GM10248 (cell line): ENCODE measurements at regions of chr2 and their contacts with region 1.

Region 1: GRCh38 chr2:85642725-85643124 is 25.3 kb downstream of the SFTPB start:
- DNase-seq: no peak
- CTCF ChIP-seq: no peak

Region 2: GRCh38 chr2:85485815-85486214 is 156.9 kb before region 1 on chr2:
- CTCF ChIA-PET with region 1: no interaction called
- POLR2A ChIA-PET with region 1: no interaction called
- DNase-seq: no peak
- CTCF ChIP-seq: no peak

Region 3: DNA sequence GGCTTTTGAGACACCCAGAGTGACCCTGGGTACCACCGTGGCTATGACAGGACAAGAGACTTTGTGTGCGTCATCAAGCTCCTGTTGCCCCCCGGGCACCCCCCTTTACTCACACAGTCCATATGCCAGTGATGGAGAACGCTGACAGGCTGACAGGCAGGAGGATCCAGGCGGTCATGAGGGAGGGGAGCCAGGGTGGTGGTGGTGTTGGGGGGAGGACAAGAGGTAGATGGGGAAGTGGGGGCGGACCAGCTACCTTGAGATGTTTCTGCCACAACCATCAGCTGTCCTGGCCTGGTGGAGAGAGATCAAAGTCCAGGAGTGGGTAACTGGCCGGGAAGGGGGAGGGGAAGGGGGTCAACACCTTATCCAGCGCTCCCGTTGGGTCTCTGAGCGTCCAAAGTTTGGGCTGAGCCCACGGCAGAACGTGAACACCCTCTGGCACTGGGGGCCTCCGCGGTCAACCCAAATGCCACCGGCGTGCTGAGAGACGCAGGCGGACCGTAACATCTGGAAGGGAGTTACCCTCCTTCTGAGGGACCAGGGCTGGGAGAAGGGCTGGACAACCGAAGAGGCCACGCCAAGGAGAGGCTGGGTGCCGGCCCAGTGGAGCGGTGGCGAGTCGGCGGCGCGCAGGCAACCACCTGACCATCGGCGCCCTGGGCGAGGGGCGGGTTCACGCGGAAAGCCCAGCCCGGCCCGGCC is 40.8 kb before region 1 on chr2:
- CTCF ChIA-PET with region 1: interaction called, 11 read pairs
- POLR2A ChIA-PET with region 1: no interaction called
- DNase-seq: peak; percentile 48
- CTCF ChIP-seq: no peak

Region 4: DNA sequence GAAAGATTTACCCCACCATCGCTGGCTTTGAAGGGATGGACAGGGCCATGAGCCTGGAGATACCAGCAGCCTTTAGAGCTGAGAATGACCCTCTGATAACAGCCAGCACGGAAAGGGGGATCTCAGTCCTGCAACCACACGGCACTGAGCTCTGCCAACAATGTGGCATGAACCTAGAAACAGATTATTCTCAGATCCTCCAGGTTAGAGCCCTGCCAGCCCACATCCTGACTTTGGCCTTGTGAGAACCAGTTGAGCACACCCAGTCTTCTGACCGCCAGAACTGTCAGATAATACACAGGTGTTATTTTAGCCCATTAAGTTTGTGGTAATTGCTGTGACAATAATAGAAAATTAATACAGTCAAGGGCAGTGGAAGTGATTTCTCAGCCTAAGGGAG is 42.1 kb after region 1 on chr2:
- CTCF ChIA-PET with region 1: interaction called, 12 read pairs
- POLR2A ChIA-PET with region 1: no interaction called
- DNase-seq: no peak
- CTCF ChIP-seq: no peak

Region 5: GRCh38 chr2:85712849-85713602 is 70.3 kb after region 1 on chr2:
- CTCF ChIA-PET with region 1: interaction called, 117 read pairs
- POLR2A ChIA-PET with region 1: no interaction called
- DNase-seq: no peak
- CTCF ChIP-seq: no peak

Region 6: GRCh38 chr2:85728883-85729824 is 86.4 kb after region 1 on chr2:
- CTCF ChIA-PET with region 1: interaction called, 13 read pairs
- POLR2A ChIA-PET with region 1: interaction called, 4 read pairs
- DNase-seq: peak; percentile 89
- CTCF ChIP-seq: peak; percentile 96

Region 7: GRCh38 chr2:85772019-85772745 is 129.5 kb after region 1 on chr2:
- CTCF ChIA-PET with region 1: no interaction called
- POLR2A ChIA-PET with region 1: no interaction called
- DNase-seq: no peak
- CTCF ChIP-seq: no peak

Region 8: GRCh38 chr2:86238354-86238753 is 595.6 kb after region 1 on chr2:
- CTCF ChIA-PET with region 1: no interaction called
- POLR2A ChIA-PET with region 1: no interaction called
- DNase-seq: peak; percentile 75
- CTCF ChIP-seq: no peak